SK-MEL-5 (cell line): ENCODE measurements at regions of chr4 and their contacts with region 1.

Region 1: DNA sequence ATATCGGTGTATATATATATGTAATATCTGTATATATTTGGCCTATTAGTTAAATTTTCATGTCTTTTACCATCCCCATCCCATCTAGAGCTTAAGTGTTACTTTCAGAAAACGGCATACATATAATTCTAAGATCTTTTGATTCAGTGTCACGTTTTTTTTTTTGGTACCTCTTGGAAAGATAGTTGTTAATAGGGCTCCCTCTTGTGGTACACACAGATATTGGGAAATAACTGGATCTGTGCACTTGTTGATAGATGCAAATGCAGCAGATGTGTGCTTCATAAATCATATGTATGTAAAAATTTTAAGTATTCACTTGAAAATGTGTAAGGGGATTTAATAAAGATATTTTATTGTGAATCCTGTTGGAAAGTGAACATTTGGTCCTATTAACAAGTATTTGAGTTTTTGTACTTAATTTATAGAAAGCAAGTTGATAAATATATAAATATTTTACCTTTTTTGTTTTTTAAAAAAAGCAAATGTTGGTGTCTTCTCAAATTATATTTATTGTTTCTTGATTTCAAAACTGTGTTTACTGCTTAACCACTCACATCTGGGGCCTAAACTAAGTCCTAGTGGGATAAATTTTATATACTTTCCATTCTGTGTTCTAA is 74.7 kb downstream of the PAQR3 start:
- DNase-seq: peak; percentile 76

Region 2: GRCh38 chr4:78481180-78481579 is 383.3 kb before region 1 on chr4:
- in situ Hi-C with region 1: no loop called
- DNase-seq: peak; percentile 69

Region 3: DNA sequence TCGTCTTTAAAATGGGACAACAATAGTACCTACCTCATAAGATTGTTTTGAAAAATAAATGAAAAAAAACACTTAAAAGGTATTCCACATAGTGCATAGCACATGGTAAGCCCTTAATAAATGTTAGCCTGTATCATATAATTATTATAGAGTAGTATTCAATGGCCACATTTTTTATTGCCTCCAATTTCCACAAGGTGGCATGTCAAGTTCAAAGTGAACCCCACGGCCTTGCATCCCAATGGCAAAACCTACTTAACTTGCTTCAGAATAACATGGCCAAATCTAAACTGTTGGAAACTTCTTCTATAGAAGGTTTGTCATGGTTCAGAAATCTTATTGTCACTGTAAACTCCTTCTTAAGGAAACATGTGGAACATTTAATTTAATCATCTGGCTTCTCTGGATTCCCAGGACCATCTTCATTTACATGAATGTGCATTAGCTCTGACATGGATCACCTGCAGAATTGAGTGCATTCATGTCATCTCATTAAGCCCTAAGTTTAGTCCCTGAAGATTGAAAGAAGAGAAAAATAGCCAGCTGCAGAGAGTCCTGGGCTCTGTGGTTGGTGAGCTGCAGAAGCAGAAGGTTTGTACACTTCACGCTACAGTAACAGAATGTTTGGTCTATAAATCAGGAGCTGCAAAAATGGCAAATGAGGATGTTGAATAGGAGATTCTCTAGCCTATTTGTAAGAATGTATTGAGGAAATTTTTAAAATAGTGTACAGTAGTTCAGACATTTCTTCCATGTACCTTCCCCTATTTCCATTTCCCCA is 251.9 kb before region 1 on chr4:
- in situ Hi-C with region 1: loop called (anchors 25 kb)
- DNase-seq: peak; percentile 59

Region 4: DNA sequence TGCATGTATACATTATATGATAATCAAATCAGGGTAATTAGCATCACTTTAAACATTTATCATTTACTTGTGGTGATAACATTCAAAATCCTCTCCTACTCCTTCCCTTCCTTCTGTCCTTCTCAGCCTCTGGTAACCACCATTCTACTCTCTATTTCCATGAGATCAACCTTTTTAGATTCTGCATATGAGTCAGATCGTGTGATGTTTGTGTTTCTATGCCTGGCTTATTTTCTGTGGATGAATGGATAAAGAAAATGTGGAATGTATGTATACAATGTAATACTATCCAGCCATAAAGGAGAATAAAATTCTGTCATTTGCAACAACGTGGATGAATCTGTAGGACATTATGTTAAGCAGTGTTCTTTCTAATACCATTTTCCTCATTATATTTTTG is 337.5 kb after region 1 on chr4:
- in situ Hi-C with region 1: no loop called
- DNase-seq: no peak

Region 5: DNA sequence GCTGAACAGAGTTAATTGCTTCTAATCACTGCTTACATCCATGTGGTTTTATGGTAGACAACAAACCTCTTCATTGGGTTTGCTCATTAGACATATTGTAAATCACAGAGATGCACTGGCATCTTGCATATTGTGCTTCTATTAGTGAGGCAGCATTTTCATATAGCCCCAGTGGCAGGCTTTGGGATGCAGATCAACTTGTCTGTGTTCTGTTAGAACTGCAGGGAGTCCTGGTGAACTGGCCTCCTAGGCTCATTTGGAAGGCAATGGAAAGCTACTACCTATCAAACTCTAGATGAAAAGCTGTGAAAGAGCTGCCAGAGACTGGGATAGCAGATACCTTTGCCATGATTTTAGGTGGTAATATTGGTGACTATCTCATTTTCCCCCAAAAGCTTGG is 352.5 kb after region 1 on chr4:
- in situ Hi-C with region 1: no loop called
- DNase-seq: no peak